Activated T-helper 1 cell treated with anti-CD3 and anti-CD28 coated beads, Interleukin-12 subunit alpha, Interleukin-12 subunit beta, Interleukin-2, Interleukin-4 antibody, amounts not matched to agents 30 ng/mL and 10 ng/mL and 1 ng/mL, durations not matched to agents 14 hours and 24 hours and 36 hours (primary cell): ENCODE measurements at regions of chr2 and their contacts with region 1.

Region 1: GRCh38 chr2:45000921-45001868 is 8.1 kb downstream of the SIX2 start:
- DNase-seq: no peak
- H3K4me3 Mint-ChIP-seq: no peak overlapping the region
- H3K27ac Mint-ChIP-seq: no peak overlapping the region
- H3K4me1 Mint-ChIP-seq: no peaks in the 10 kb centered on the region
- H3K27me3 Mint-ChIP-seq: peaks cover 73% of the 10 kb centered on the region

Region 2: DNA sequence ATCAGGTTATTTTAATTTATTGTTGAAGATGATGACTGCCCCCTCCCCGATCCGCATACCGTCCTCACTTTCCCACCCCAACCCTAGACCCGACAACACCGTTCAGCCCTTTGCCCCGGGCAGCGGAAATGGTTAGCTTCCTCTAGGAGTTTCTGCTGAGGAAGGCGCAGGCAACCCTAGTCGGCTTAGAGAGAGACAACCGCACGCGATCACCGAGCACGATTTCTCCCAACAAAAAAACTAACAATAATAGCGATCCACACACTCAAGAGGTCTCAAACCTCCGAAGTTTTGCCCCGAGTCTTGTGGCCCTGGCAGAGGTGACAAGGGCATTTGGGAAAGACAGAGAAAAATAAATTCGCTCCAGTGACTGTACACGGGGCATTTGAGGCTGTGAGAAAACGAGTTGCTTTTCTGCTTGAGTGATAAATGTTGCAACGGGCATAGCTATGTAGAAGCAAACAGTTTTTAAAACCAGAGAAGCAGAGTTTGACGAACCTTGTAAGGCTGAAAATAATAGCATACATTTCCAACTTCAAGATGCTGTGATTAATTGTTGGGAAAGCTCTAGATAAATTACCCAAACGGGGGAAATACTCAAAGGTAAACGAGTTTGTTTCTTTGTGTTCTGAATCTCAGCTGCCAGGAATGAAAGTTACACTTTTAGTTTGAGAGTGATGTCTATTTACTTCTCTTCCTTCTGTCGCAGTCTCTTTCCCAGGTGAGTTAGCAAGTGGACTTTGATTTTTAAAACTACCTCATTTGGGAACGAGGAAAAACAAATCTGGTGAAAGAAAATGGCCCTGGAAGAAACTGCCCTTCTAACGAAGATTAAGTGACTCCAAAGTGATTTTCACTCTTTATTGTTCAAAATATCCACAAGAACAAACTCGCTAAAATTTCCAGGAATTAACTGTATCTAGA is 70.7 kb before region 1 on chr2:
- intact Hi-C with region 1: loop called (anchors 2 kb)
- DNase-seq: no peak
- H3K4me3 Mint-ChIP-seq: no peak overlapping the region
- H3K27ac Mint-ChIP-seq: no peak overlapping the region
- H3K4me1 Mint-ChIP-seq: peaks cover 5% of the 10 kb centered on the region
- H3K27me3 Mint-ChIP-seq: peaks cover 83% of the 10 kb centered on the region

Region 3: GRCh38 chr2:45169339-45170190 is 168.4 kb after region 1 on chr2:
- intact Hi-C with region 1: loop called (anchors 5 kb)
- DNase-seq: no peak
- H3K4me3 Mint-ChIP-seq: no peak overlapping the region
- H3K27ac Mint-ChIP-seq: no peak overlapping the region
- H3K4me1 Mint-ChIP-seq: peaks cover 5% of the 10 kb centered on the region
- H3K27me3 Mint-ChIP-seq: peaks cover 69% of the 10 kb centered on the region